ENCODE measurements at regions of chrX and their contacts with region 1.

Region 1: GRCh38 chrX:49043220-49043986 is at the start of gene TFE3:
- DNase-seq: peak; percentile 99
- H3K4me3 ChIP-seq: peak within 1 kb of the TSS; percentile 66 to 86 (median 70)
- H3K27ac ChIP-seq: peak within 1 kb of the TSS; percentile 86
- H3K4me1 ChIP-seq: peaks cover 33% of the 10 kb centered on the region
- H3K27me3 ChIP-seq: no peaks in the 10 kb centered on the region
- CTCF ChIP-seq: peak; percentile 59
- POLR2A ChIP-seq: peak; percentile 41
- total RNA-seq, gene TFE3: 35.5 and 37.1 TPM in 2 replicates

Region 2: GRCh38 chrX:48801280-48802088 is 241.9 kb before region 1 on chrX and contains the start of gene HDAC6:
- CTCF ChIA-PET with region 1: no interaction called
- POLR2A ChIA-PET with region 1: no interaction called
- dilution Hi-C with region 1: no loop called
- intact Hi-C with region 1: loop called (anchors 2 kb)
- DNase-seq: peak; percentile 99
- H3K4me3 ChIP-seq: peak within 1 kb of the TSS; percentile 57 to 75 (median 58)
- H3K27ac ChIP-seq: peak within 1 kb of the TSS; percentile 87
- H3K4me1 ChIP-seq: peaks cover 4% of the 10 kb centered on the region
- H3K27me3 ChIP-seq: no peaks in the 10 kb centered on the region
- CTCF ChIP-seq: no peak
- POLR2A ChIP-seq: no peak
- total RNA-seq, gene HDAC6: 58.4 and 65.7 TPM in 2 replicates

Region 3: GRCh38 chrX:48957827-48958634 is 85.4 kb before region 1 on chrX:
- CTCF ChIA-PET with region 1: no interaction called
- POLR2A ChIA-PET with region 1: interaction called, 8 read pairs
- dilution Hi-C with region 1: no loop called
- intact Hi-C with region 1: loop called (anchors 1 kb)
- DNase-seq: peak; percentile 97
- H3K4me3 ChIP-seq: peak overlapping the region; percentile 15 to 71 (median 56)
- H3K27ac ChIP-seq: peak overlapping the region; percentile 87
- H3K4me1 ChIP-seq: peaks cover 16% of the 10 kb centered on the region
- H3K27me3 ChIP-seq: no peaks in the 10 kb centered on the region
- CTCF ChIP-seq: no peak
- POLR2A ChIP-seq: peak; percentile 34

Region 4: GRCh38 chrX:49001521-49002090 is 41.8 kb before region 1 on chrX:
- CTCF ChIA-PET with region 1: interaction called, 3 read pairs
- POLR2A ChIA-PET with region 1: interaction called, 4 read pairs
- dilution Hi-C with region 1: no loop called
- intact Hi-C with region 1: loop called (anchors 1 kb)
- DNase-seq: peak; percentile 50
- H3K4me3 ChIP-seq: peak overlapping the region; percentile 67 to 92 (median 83)
- H3K27ac ChIP-seq: peak overlapping the region; percentile 99
- H3K4me1 ChIP-seq: peaks cover 3% of the 10 kb centered on the region
- H3K27me3 ChIP-seq: no peaks in the 10 kb centered on the region
- CTCF ChIP-seq: no peak
- POLR2A ChIP-seq: no peak

Region 5: GRCh38 chrX:49100704-49101628 is 57.6 kb after region 1 on chrX:
- CTCF ChIA-PET with region 1: no interaction called
- POLR2A ChIA-PET with region 1: no interaction called
- dilution Hi-C with region 1: no loop called
- intact Hi-C with region 1: loop called (anchors 2 kb)
- DNase-seq: peak; percentile 94
- H3K4me3 ChIP-seq: peak overlapping the region; percentile 35 to 54 (median 50)
- H3K27ac ChIP-seq: no peak overlapping the region
- H3K4me1 ChIP-seq: no peaks in the 10 kb centered on the region
- H3K27me3 ChIP-seq: no peaks in the 10 kb centered on the region
- CTCF ChIP-seq: no peak
- POLR2A ChIP-seq: peak; percentile 39

Region 6: GRCh38 chrX:49163555-49164419 is 120.4 kb after region 1 on chrX:
- CTCF ChIA-PET with region 1: no interaction called
- POLR2A ChIA-PET with region 1: no interaction called
- dilution Hi-C with region 1: no loop called
- intact Hi-C with region 1: loop called (anchors 5 kb)
- DNase-seq: peak; percentile 80
- H3K4me3 ChIP-seq: peak overlapping the region in 1 of 3 experiments; percentile 38
- H3K27ac ChIP-seq: peak overlapping the region; percentile 79
- H3K4me1 ChIP-seq: peaks cover 21% of the 10 kb centered on the region
- H3K27me3 ChIP-seq: no peaks in the 10 kb centered on the region
- CTCF ChIP-seq: peak; percentile 63 to 69
- POLR2A ChIP-seq: no peak

Region 7: DNA sequence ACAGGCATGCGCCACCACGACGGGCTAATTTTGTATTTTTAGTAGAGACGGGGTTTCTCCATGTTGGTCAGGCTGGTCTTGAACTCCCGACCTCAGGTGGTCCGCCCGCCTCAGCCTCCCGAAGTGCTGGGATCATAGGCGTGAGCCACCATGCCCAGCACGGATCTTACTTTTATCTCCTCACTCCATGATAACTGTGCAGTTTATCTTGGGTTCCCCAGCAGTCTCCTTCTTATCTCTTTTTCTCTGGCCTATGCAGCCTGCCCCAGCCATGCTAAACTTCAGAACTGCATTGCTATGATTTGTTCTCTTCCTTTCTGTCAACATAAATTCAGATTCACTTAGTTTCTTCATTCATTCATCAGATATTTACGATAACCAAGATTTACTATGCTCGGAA is 630.0 kb after region 1 on chrX:
- CTCF ChIA-PET with region 1: no interaction called
- POLR2A ChIA-PET with region 1: no interaction called
- dilution Hi-C with region 1: no loop called
- intact Hi-C with region 1: no loop called
- DNase-seq: no peak
- H3K4me3 ChIP-seq: no peak overlapping the region
- H3K27ac ChIP-seq: no peak overlapping the region
- H3K4me1 ChIP-seq: no peaks in the 10 kb centered on the region
- H3K27me3 ChIP-seq: no peaks in the 10 kb centered on the region
- CTCF ChIP-seq: no peak
- POLR2A ChIP-seq: no peak

Measured in endothelial cell of umbilical vein (primary cell).